ENCODE measurements at regions of chr11 and their contacts with region 1.

Region 1: GRCh38 chr11:63938479-63939396 is at the start of gene NAA40:
- DNase-seq: peak; percentile 77 to 98 (median 87)
- ATAC-seq: peak; percentile 85
- H3K4me3 ChIP-seq: peak within 1 kb of the TSS; percentile 80
- H3K4me3 Mint-ChIP-seq: peak within 1 kb of the TSS; percentile 88
- H3K27ac ChIP-seq: peak within 1 kb of the TSS; percentile 44 to 68
- H3K27ac Mint-ChIP-seq: peak within 1 kb of the TSS; percentile 45
- H3K4me1 ChIP-seq: peaks cover 23% of the 10 kb centered on the region
- H3K4me1 Mint-ChIP-seq: peaks cover 26% of the 10 kb centered on the region
- H3K27me3 ChIP-seq: no peaks in the 10 kb centered on the region
- H3K27me3 Mint-ChIP-seq: no peaks in the 10 kb centered on the region
- CTCF ChIP-seq: peak; percentile 6
- total RNA-seq, gene NAA40: 11.8 to 14.0 TPM

Region 2: GRCh38 chr11:63681321-63682049 is 257.3 kb before region 1 on chr11 and contains the start of gene RTN3:
- CTCF ChIA-PET with region 1: no interaction called
- POLR2A ChIA-PET with region 1: no interaction called
- intact Hi-C with region 1: loop called in 1 of 2 experiments (anchors 5 kb)
- DNase-seq: peak; percentile 94 to 100 (median 98)
- ATAC-seq: peak; percentile 90
- H3K4me3 ChIP-seq: peak within 1 kb of the TSS; percentile 94
- H3K4me3 Mint-ChIP-seq: peak within 1 kb of the TSS; percentile 85
- H3K27ac ChIP-seq: peak within 1 kb of the TSS; percentile 62 to 92
- H3K27ac Mint-ChIP-seq: peak within 1 kb of the TSS; percentile 59
- H3K4me1 ChIP-seq: peaks cover 18% of the 10 kb centered on the region
- H3K4me1 Mint-ChIP-seq: peaks cover 31% of the 10 kb centered on the region
- H3K27me3 ChIP-seq: no peaks in the 10 kb centered on the region
- H3K27me3 Mint-ChIP-seq: no peaks in the 10 kb centered on the region
- CTCF ChIP-seq: no peak
- total RNA-seq, gene RTN3: 16.4 to 17.6 TPM

Region 3: GRCh38 chr11:63888170-63889086 is 50.3 kb before region 1 on chr11:
- CTCF ChIA-PET with region 1: no interaction called
- POLR2A ChIA-PET with region 1: no interaction called
- intact Hi-C with region 1: no loop called
- DNase-seq: peak; percentile 55 to 86 (median 72)
- ATAC-seq: peak; percentile 87
- H3K4me3 ChIP-seq: peak overlapping the region; percentile 81
- H3K4me3 Mint-ChIP-seq: peak overlapping the region; percentile 96
- H3K27ac ChIP-seq: peak overlapping the region; percentile 69 to 73
- H3K27ac Mint-ChIP-seq: peak overlapping the region; percentile 78
- H3K4me1 ChIP-seq: peaks cover 86% of the 10 kb centered on the region
- H3K4me1 Mint-ChIP-seq: peaks cover 78% of the 10 kb centered on the region
- H3K27me3 ChIP-seq: no peaks in the 10 kb centered on the region
- H3K27me3 Mint-ChIP-seq: no peaks in the 10 kb centered on the region
- CTCF ChIP-seq: no peak

Region 4: GRCh38 chr11:63916837-63917691 is 21.7 kb before region 1 on chr11 and contains the start of gene RCOR2:
- CTCF ChIA-PET with region 1: interaction called, 7 read pairs
- POLR2A ChIA-PET with region 1: no interaction called
- intact Hi-C with region 1: loop called in 1 of 2 experiments (anchors 2 kb)
- DNase-seq: peak; percentile 34 to 83 (median 57)
- ATAC-seq: peak; percentile 73
- H3K4me3 ChIP-seq: peak within 1 kb of the TSS; percentile 51
- H3K4me3 Mint-ChIP-seq: peak within 1 kb of the TSS; percentile 82
- H3K27ac ChIP-seq: no peak within 1 kb of the TSS
- H3K27ac Mint-ChIP-seq: no peak within 1 kb of the TSS
- H3K4me1 ChIP-seq: peaks cover 45% of the 10 kb centered on the region
- H3K4me1 Mint-ChIP-seq: peaks cover 16% of the 10 kb centered on the region
- H3K27me3 ChIP-seq: no peaks in the 10 kb centered on the region
- H3K27me3 Mint-ChIP-seq: no peaks in the 10 kb centered on the region
- CTCF ChIP-seq: no peak
- total RNA-seq, gene RCOR2: not detected

Region 5: DNA sequence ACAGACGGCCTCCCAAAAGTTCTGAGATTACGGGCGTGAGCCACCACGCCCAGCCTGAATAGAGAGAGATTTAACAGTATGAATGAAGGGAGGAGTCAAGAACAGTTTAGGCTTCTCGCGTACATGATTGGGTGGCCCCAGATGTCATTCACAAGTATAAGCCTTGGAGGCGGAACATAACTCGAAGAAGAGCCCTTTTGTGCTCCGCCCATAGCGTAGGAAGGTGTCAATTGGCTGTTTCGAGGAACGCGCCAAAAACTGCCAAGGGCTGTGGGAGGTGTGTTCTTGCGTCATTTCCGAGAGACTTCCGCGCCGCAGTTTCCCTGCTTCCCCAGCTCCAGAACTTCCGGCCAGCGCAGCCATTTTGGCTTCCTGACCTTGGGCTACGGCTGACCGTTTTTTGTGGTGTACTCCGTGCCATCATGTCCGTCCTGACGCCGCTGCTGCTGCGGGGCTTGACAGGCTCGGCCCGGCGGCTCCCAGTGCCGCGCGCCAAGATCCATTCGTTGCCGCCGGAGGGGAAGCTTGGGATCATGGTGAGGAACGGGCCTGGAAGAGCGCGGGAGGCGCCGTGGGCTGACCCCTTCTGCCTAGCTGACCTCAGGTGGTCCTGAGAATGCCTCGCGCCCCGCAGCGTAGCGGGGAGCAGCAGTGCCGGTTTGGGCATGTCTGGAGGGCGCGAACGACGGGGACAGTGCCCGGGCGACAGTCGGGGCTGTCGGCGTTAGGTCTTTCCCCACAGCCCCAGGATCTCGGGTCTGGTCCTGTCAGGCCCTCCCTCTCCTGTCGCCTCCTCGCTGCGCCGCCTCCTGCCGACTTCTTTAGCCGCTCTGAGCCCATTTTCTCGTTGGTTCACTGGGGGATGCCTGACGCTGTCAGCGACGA is 35.8 kb after region 1 on chr11 and contains the start of gene COX8A:
- CTCF ChIA-PET with region 1: no interaction called
- POLR2A ChIA-PET with region 1: no interaction called
- intact Hi-C with region 1: loop called in 1 of 2 experiments (anchors 5 kb)
- DNase-seq: peak; percentile 85 to 99 (median 90)
- ATAC-seq: peak; percentile 99
- H3K4me3 ChIP-seq: peak within 1 kb of the TSS; percentile 94
- H3K4me3 Mint-ChIP-seq: peak within 1 kb of the TSS; percentile 100
- H3K27ac ChIP-seq: peak within 1 kb of the TSS; percentile 90 to 95
- H3K27ac Mint-ChIP-seq: peak within 1 kb of the TSS; percentile 99
- H3K4me1 ChIP-seq: peaks cover 27% of the 10 kb centered on the region
- H3K4me1 Mint-ChIP-seq: peaks cover 25% of the 10 kb centered on the region
- H3K27me3 ChIP-seq: peaks cover 0 to 4% of the 10 kb centered on the region in 2 experiments
- H3K27me3 Mint-ChIP-seq: no peaks in the 10 kb centered on the region
- CTCF ChIP-seq: no peak
- total RNA-seq, gene COX8A: 89.1 to 105 TPM

Region 6: GRCh38 chr11:64021757-64022093 is 83.0 kb after region 1 on chr11:
- CTCF ChIA-PET with region 1: no interaction called
- POLR2A ChIA-PET with region 1: no interaction called
- intact Hi-C with region 1: no loop called
- DNase-seq: no peak
- ATAC-seq: no peak
- H3K4me3 ChIP-seq: no peak overlapping the region
- H3K4me3 Mint-ChIP-seq: no peak overlapping the region
- H3K27ac ChIP-seq: no peak overlapping the region
- H3K27ac Mint-ChIP-seq: no peak overlapping the region
- H3K4me1 ChIP-seq: no peaks in the 10 kb centered on the region
- H3K4me1 Mint-ChIP-seq: no peaks in the 10 kb centered on the region
- H3K27me3 ChIP-seq: no peaks in the 10 kb centered on the region
- H3K27me3 Mint-ChIP-seq: no peaks in the 10 kb centered on the region
- CTCF ChIP-seq: no peak

Region 7: GRCh38 chr11:64304316-64305072 is 365.8 kb after region 1 on chr11:
- CTCF ChIA-PET with region 1: no interaction called
- POLR2A ChIA-PET with region 1: no interaction called
- intact Hi-C with region 1: no loop called
- DNase-seq: peak; percentile 88 to 98 (median 94)
- ATAC-seq: peak; percentile 27
- H3K4me3 ChIP-seq: peak overlapping the region; percentile 92
- H3K4me3 Mint-ChIP-seq: peak overlapping the region; percentile 98
- H3K27ac ChIP-seq: peak overlapping the region; percentile 84 to 93
- H3K27ac Mint-ChIP-seq: peak overlapping the region; percentile 96
- H3K4me1 ChIP-seq: peaks cover 55% of the 10 kb centered on the region
- H3K4me1 Mint-ChIP-seq: peaks cover 42% of the 10 kb centered on the region
- H3K27me3 ChIP-seq: peaks cover 25 to 26% of the 10 kb centered on the region in 2 experiments
- H3K27me3 Mint-ChIP-seq: peaks cover 34% of the 10 kb centered on the region
- CTCF ChIP-seq: peak; percentile 92

Measured in CD4-positive, alpha-beta T cell (primary cell).